Activated CD4-positive, alpha-beta memory T cell treated with anti-CD3 and anti-CD28 coated beads for 36 hours (primary cell): ENCODE measurements at regions of chr20 and their contacts with region 1.

Region 1: DNA sequence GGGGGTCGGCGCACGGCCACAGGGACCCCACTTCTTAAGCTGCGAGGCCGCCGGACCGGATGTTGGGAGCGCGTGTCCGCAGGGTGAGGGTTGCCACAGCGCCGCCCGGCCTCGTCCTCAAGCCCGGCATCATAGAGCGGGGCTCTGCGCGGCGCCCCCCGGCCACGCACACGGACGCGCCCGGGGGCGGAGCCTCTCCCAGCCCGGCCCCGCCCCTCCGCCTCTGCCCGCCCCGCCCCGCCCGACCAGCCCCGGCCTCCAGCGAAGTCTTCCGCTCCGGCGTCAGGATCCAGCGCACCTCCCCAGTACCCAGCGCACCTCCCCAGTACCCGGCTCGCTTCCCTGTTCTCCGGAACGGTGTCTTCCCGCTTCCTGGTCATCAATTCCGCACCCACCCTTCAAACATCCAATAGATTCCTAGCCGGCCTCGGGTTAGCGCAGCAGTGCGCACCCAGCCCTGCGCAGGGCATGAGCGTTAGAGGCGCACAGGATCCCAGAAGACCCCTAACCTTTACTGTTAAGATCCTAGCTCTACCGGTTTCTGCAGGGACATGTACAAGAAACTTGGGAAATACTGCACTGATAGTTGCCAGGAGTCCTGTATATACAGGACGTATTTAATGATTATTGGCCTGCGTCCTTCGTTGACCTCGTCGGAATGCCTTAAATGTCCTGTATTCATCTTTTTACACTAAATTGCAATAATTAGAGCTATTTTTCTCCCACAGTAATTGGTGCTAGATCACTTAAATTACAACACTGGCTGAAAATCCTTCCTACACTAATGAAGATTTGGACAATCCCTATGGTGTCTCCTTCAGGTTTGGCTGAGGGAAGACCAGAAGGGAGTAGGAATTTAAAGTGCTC is 535 bp upstream of the DNAAF9 start:
- DNase-seq: peak; percentile 74
- H3K4me3 Mint-ChIP-seq: peak overlapping the region; percentile 84
- H3K27ac Mint-ChIP-seq: peak overlapping the region; percentile 75
- H3K4me1 Mint-ChIP-seq: peaks cover 34% of the 10 kb centered on the region
- H3K27me3 Mint-ChIP-seq: no peaks in the 10 kb centered on the region

Region 2: GRCh38 chr20:3383878-3384495 is 24.0 kb before region 1 on chr20:
- CTCF ChIA-PET with region 1: interaction called, 3 read pairs
- POLR2A ChIA-PET with region 1: interaction called, 5 read pairs
- intact Hi-C with region 1: loop called (anchors 1 kb)
- DNase-seq: peak; percentile 72
- H3K4me3 Mint-ChIP-seq: no peak overlapping the region
- H3K27ac Mint-ChIP-seq: peak overlapping the region; percentile 70
- H3K4me1 Mint-ChIP-seq: peaks cover 18% of the 10 kb centered on the region
- H3K27me3 Mint-ChIP-seq: no peaks in the 10 kb centered on the region

Region 3: GRCh38 chr20:3470627-3471396 is 62.8 kb after region 1 on chr20 and contains the start of gene ATRN:
- CTCF ChIA-PET with region 1: no interaction called
- POLR2A ChIA-PET with region 1: interaction called, 3 read pairs
- intact Hi-C with region 1: loop called (anchors 5 kb)
- DNase-seq: peak; percentile 95
- H3K4me3 Mint-ChIP-seq: peak within 1 kb of the TSS; percentile 85
- H3K27ac Mint-ChIP-seq: peak within 1 kb of the TSS; percentile 51
- H3K4me1 Mint-ChIP-seq: peaks cover 32% of the 10 kb centered on the region
- H3K27me3 Mint-ChIP-seq: no peaks in the 10 kb centered on the region
- total RNA-seq, gene ATRN: 7.3 to 7.8 TPM